Posterior vena cava (tissue), 2 donors: ENCODE measurements at regions of chr1 and their contacts with region 1.

Region 1: DNA sequence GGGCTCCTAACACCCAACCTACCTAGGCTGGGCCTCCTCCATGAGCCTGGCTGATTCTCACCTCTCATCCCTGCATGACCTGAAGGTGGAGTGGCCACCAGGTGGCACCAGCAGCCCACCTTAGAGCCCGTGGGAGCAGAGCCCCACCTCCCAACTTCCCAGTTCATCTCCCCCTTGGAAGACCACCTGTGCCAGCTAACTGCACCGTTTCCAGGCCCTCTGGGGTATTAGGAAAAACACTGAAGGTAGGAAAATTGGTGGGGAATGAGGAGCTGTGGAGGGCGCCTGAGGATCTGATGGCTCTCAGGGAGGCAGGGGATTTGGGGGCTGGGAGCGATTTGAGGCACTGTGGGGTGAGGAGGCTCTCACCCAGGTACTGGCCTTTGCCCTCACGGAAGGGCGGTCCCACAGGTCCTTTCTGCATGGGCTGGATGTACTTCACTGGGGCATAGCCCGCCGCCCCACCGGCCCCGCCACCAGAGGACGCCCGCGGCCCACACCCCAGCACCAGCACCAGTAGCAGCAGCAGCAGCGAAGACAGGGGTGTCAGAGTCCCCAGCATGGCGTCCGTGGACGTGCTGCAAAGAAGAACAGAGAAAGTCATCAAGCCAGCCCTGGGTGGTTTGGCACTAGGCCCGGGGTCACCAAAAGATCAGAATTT is 11.1 kb downstream of the ADPRS start:
- DNase-seq: peak; percentile 92

Region 2: DNA sequence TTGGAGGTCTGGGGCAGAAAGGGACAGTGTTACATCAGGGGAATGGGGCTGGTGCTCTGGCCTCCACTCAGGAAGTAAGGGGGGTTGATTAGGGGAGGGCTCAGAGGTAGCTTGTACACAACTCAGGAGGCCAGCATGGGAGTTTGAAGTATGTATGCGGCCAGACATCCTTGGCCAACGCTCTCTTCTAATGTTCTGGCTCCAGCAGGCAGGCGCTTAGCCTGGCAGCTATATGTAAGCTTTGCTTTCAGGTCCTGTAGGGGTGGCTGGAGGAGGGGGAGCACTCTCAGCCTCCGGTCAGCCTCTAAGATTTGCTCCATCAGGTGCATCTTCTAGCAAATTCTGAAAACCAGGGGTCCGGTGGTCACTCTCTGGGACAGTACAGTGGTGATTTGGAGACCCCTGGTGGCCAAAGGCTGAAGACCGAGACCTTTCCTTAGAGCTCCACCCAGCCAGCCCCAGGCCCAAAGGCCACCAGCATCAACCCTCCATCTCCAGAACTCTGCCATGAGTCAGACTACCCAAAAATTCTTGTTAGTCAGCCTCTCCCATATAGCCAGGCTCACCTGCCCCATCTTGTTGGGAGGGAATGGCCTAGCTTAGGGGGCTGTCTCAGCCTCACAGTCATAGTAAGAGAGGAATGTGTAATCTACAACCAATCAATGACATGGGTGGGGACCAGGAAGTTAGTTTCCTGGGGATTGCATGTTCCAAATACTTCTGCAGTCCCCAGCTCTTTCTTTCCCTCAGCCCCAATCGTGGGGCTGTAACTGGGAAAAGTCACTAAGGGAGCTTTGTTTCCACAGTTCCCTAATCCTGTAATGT is 34.9 kb after region 1 on chr1:
- intact Hi-C with region 1: loop called in 1 of 2 experiments (anchors 2 kb)
- DNase-seq: no peak

Region 3: GRCh38 chr1:36178471-36179219 is 78.8 kb after region 1 on chr1:
- intact Hi-C with region 1: loop called in 1 of 2 experiments (anchors 1 kb)
- DNase-seq: no peak

Region 4: GRCh38 chr1:36285448-36286101 is 185.8 kb after region 1 on chr1:
- intact Hi-C with region 1: loop called (anchors 2 to 5 kb)
- DNase-seq: no peak

Region 5: DNA sequence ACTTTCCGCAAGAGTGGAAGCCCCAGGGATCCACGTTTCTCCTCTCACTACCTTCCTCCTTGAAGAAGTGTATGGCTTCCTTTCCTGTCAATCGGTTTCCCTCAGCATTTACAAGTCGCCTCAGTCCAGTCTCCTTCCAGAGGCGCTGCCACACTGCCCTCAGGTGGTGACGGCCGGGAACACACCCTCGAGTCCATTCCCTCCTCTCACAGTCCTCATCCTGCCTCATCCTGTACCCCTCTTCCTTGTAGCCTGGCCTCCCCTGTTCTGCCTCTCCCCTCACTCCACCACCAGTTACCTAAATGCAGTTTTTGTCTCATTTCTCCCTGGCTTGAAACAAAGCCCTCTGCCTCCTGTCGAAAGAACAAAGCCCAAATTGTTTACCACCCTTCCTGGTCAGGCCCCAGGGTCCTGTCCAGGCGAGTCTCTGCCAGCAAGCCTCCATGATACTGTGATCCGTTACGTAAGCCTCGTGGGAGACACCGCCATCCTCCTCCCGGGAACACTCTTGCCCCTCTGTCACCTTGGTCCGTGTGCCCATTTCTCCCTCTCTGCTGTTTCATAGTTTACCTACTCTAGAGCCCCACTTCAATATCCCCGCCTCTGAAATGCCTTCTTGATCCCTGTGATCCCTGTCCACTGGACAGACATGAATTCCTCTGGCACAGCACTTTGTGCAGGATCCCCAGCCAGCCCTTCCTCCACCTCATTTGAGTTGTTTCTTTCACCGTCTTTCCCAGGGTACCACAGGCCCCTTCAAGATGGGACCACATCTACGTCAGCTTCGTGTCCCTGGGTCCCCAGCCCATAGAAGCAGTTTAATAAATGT is 321.2 kb after region 1 on chr1:
- intact Hi-C with region 1: loop called (anchors 10 kb)
- DNase-seq: peak; percentile 96